Ovary (tissue), 10 donors: ENCODE measurements at regions of chr4 and their contacts with region 1.

Region 1: DNA sequence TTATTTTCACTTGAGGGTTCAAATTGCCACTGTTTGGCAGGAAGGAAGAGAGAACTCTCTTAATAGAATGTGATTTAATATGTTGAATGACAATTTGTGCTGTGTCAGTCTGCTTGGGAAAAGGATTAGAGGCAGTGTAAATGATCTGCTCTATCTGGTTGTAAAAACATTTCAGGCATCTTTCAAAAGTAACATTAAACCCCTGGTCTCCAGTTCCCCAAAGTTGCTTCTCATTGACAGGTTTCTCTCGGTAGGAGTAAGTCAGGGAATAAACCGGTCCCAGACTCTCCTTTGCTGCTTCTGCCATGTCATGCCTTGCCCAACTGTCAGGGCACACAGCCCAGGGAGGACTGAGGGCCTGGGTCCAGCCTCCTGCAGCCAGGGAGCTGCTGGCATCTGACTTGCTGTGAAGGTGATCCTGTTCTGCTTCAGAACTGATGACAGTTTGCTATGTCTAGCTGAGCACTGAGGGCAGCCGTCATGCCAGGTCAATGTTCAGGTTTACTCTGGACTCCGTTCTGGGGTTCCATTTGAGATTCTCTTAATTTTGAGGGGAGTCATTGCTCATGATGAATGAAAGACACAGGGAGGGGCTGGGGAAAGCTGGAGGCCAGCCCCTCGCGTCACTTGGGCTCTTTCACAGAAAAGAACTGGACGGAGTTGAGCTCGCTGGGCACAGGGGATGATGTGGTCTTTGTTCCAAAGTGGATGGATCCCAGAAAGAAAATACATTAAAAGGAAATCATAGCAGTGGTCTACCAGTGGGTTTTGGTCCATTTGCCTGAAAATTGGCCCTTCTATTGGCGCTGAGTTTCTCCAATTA is 312.4 kb downstream of the ARHGAP10 start:
- DNase-seq: no peak
- H3K4me3 ChIP-seq: no peak overlapping the region
- H3K27ac ChIP-seq: no peak overlapping the region
- H3K4me1 ChIP-seq: peaks cover 3% of the 10 kb centered on the region
- H3K27me3 ChIP-seq: no peaks in the 10 kb centered on the region
- CTCF ChIP-seq: no peak
- EP300 ChIP-seq: no peak
- POLR2A ChIP-seq: no peak

Region 2: DNA sequence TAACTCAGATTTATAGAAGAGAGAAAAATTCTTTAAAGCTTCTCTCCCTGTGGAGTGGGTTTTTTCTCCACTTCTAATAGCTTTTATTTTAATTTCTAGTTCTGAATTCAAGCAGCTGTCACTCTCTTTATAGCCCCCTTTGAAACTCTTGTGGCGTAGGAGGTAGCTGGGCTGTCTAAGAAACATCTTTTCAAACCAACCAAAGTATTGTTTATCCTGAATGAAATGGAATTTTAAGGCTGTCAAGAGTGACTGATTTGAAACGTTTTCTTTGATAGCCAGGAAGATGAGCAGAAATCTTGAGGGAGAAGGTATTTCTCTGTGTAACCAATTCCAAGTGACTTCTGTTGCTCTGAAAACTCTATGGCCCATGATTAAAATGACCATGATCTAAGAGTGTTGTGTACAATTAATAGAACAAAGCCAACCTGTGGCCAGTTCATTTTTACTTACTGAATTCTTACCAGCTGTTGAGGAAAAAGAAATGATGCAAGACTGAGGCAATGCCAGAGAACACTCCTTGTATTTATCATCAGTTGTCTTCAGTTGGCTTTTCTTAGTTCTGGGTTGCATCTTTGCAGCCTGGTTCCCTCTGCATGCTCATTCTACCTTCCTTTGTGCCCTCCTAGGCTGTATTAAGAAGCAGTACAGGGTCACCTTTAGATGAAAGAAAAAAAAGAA is 14.0 kb before region 1 on chr4:
- intact Hi-C with region 1: no loop called
- DNase-seq: no peak
- H3K4me3 ChIP-seq: no peak overlapping the region
- H3K27ac ChIP-seq: no peak overlapping the region
- H3K4me1 ChIP-seq: peaks cover 2% of the 10 kb centered on the region
- H3K27me3 ChIP-seq: no peaks in the 10 kb centered on the region
- CTCF ChIP-seq: no peak
- EP300 ChIP-seq: no peak
- POLR2A ChIP-seq: no peak

Region 3: DNA sequence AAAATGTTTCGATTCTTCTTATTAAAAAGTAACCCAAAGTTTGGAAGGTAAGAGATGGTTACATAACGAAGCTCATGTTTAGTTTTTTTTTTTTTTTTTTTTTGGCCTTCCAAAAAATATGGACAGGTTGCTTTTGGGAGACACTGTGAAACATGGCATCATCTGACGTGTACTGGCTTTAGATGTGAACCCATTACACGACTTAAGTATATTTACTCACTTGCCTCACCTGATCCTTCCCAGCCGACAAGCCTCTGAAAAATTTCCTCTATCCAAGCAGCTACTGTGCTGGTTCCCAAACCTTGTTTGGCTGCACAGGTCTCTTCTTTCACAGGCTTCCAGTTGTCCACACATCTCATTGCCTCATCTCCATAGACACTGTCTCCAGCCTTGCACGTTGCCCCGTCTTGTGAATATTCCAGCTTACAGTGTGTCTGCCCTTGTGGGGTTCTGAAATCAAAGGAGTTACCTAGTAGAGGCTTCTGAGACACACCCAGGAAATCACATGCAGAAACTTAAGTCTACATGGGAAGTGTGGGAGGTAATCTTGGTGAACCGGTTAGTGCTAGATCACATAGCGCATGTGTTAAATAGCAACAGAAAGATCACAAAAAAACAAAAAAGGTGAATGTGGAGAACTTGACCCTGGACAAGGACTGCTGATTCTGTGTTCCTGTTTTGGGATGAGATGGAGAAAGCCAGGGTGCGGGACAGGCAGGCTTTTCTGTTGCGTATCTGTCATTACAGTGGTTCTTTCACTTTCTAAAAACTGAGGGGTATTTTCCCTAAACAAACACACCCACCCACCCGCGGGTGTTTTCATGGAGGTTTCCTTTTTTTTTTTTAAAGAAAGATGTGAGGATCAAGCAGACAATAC is 16.2 kb after region 1 on chr4:
- intact Hi-C with region 1: loop called in 1 of 4 experiments (anchors 2 kb)
- DNase-seq: no peak
- H3K4me3 ChIP-seq: no peak overlapping the region
- H3K27ac ChIP-seq: no peak overlapping the region
- H3K4me1 ChIP-seq: peaks cover 1% of the 10 kb centered on the region
- H3K27me3 ChIP-seq: no peaks in the 10 kb centered on the region
- CTCF ChIP-seq: no peak
- EP300 ChIP-seq: no peak
- POLR2A ChIP-seq: no peak

Region 4: GRCh38 chr4:148415500-148415899 is 371.2 kb after region 1 on chr4:
- intact Hi-C with region 1: no loop called
- DNase-seq: no peak
- H3K4me3 ChIP-seq: no peak overlapping the region
- H3K27ac ChIP-seq: no peak overlapping the region
- H3K4me1 ChIP-seq: peaks cover 4% of the 10 kb centered on the region
- H3K27me3 ChIP-seq: no peaks in the 10 kb centered on the region
- CTCF ChIP-seq: no peak
- EP300 ChIP-seq: no peak
- POLR2A ChIP-seq: no peak